ENCODE measurements at regions of chr1 and their contacts with region 1.

Region 1: DNA sequence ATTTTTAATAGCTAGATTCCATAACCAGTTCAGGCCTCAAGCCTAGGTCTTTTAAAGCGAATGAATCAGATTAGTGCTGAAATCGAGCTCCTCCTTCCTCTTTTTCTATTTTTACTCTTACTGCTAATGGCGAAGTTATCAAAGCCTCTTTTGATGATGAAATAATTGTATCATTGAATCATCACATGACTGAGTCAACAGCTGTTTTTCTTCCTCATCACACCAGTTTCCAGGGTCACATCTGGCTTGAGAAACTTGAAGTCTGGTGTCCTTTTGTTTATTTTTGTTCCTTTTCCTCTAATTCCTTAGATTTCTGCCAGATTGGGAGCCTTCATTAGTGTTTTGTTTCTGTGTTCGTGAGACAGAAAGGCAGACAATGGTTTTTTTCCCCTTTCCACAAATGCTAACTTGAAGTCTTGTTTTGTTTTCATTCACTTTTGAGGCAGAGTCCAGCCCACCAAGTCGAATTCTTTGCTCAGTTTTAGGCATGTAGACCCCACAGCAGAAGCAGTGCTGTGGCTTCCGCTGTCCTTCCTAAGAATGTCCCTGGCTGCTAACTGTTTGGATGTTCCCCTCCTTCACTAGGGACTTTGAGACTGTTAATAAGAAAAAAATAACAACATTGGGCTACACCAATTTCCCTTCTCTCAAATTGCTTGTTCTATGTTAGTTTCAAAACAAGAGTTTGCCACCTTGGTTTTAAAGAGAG is 51.9 kb upstream of the FMOD start:
- DNase-seq: no peak
- ATAC-seq: peak in 7 of 8 donors; percentile 64 to 79 (median 74)
- H3K4me3 ChIP-seq: no peak overlapping the region
- H3K27ac ChIP-seq: peak overlapping the region; percentile 32 to 81 (median 68)
- H3K4me1 ChIP-seq: peaks cover 5 to 49% (median 32%) of the 10 kb centered on the region in 9 donors
- H3K27me3 ChIP-seq: peaks cover 0 to 5% (median 0%) of the 10 kb centered on the region in 7 donors
- CTCF ChIP-seq: no peak

Region 2: DNA sequence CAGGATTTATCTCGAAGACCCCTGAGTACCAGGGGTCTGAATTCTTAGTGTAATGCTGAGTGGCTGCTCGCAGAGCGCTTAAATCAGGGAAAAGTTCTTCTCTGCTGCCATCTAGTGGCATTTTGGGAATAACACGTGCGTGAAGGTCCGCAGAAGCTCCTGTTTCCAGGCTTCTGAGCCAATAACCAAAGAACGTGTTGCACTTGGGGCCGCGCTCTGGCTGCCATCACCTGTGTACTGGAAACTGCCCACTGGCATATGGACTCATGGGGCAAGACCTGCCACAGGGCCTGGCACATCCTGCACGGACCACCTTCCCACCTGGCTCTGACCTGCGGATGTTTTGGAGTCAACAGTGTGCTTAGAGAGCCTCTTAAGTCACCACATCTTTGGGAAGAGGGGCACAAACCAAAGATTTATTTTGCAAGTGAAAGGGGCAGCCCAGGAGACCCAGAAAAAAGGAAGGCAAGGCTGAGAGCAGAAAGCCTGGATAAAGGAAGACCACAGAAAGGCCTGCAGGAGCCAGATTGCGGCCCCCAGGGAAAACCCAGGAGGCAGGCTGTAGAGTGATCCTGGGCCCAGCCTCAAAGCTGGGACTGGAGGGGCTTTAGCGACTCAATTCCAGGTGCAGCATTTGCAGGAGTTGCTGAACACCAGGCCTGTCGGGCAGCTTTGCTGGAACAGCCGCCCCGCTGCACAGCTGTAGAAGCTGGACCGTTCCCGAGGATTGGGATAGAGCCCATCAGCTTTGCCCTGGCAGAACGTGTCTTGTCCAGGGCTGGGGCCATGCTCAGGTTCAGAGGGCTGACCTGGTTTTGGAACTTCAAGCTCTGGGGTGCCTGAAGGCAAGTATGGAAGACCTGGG is 186.3 kb before region 1 on chr1:
- intact Hi-C with region 1: no loop called
- DNase-seq: peak in 1 of 2 donors; percentile 58
- ATAC-seq: peak; percentile 55 to 88 (median 76)
- H3K4me3 ChIP-seq: no peak overlapping the region
- H3K27ac ChIP-seq: no peak overlapping the region
- H3K4me1 ChIP-seq: peaks cover 0 to 15% (median 0%) of the 10 kb centered on the region in 9 donors
- H3K27me3 ChIP-seq: peaks cover 0 to 16% (median 11%) of the 10 kb centered on the region in 7 donors
- CTCF ChIP-seq: peak; percentile 75 to 91 (median 82)

Region 3: GRCh38 chr1:203359010-203359571 is 43.7 kb before region 1 on chr1:
- intact Hi-C with region 1: loop called in 1 of 10 experiments (anchors 2 kb)
- DNase-seq: no peak
- ATAC-seq: no peak
- H3K4me3 ChIP-seq: no peak overlapping the region
- H3K27ac ChIP-seq: no peak overlapping the region
- H3K4me1 ChIP-seq: peaks cover 0 to 9% (median 3%) of the 10 kb centered on the region in 9 donors
- H3K27me3 ChIP-seq: peaks cover 0 to 12% (median 0%) of the 10 kb centered on the region in 7 donors
- CTCF ChIP-seq: no peak

Region 4: GRCh38 chr1:203448521-203449061 is 45.8 kb after region 1 on chr1:
- intact Hi-C with region 1: loop called in 3 of 10 experiments (anchors 5 kb)
- DNase-seq: peak in 1 of 2 donors; percentile 41
- ATAC-seq: peak; percentile 32 to 67 (median 62)
- H3K4me3 ChIP-seq: no peak overlapping the region
- H3K27ac ChIP-seq: peak overlapping the region in 8 of 10 donors; percentile 28 to 72 (median 62)
- H3K4me1 ChIP-seq: peaks cover 0 to 30% (median 10%) of the 10 kb centered on the region in 9 donors
- H3K27me3 ChIP-seq: peaks cover 0 to 22% (median 0%) of the 10 kb centered on the region in 7 donors
- CTCF ChIP-seq: no peak